MCF 10A (cell line): ENCODE measurements at regions of chr5 and their contacts with region 1.

Region 1: DNA sequence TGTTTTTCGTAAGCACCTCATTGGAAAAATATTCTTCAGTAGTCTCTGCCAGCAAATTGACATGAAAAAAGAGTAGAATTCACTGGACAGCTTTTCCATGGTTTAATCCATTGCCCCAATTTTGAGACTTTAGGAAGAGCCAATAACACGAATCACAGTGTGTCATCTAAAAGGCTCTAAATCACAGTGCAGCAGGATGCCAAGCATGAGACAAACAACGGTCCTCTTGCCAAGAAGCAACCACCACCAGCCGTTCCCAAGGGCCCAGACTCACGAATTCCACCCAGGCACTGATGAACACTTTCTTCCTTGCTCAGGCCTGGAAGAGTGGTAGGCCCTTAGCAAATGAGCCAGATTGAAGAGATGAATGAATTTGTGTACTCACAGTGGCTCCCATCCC is 18.3 kb upstream of the IRX4 start:
- DNase-seq: no peak
- H3K4me3 Mint-ChIP-seq: no peak overlapping the region
- H3K27ac Mint-ChIP-seq: no peak overlapping the region
- H3K4me1 Mint-ChIP-seq: no peaks in the 10 kb centered on the region
- H3K27me3 Mint-ChIP-seq: no peaks in the 10 kb centered on the region
- CTCF ChIP-seq: no peak

Region 2: GRCh38 chr5:1889321-1890065 is 11.6 kb before region 1 on chr5:
- CTCF ChIA-PET with region 1: interaction called, 4 read pairs
- POLR2A ChIA-PET with region 1: interaction called, 18 read pairs
- intact Hi-C with region 1: no loop called
- DNase-seq: peak; percentile 80
- H3K4me3 Mint-ChIP-seq: peak overlapping the region; percentile 32
- H3K27ac Mint-ChIP-seq: peak overlapping the region; percentile 84
- H3K4me1 Mint-ChIP-seq: peaks cover 17% of the 10 kb centered on the region
- H3K27me3 Mint-ChIP-seq: no peaks in the 10 kb centered on the region
- CTCF ChIP-seq: no peak

Region 3: GRCh38 chr5:3020426-3020825 is 1119.4 kb after region 1 on chr5:
- CTCF ChIA-PET with region 1: no interaction called
- POLR2A ChIA-PET with region 1: no interaction called
- intact Hi-C with region 1: no loop called
- DNase-seq: no peak
- H3K4me3 Mint-ChIP-seq: no peak overlapping the region
- H3K27ac Mint-ChIP-seq: no peak overlapping the region
- H3K4me1 Mint-ChIP-seq: no peaks in the 10 kb centered on the region
- H3K27me3 Mint-ChIP-seq: no peaks in the 10 kb centered on the region
- CTCF ChIP-seq: no peak